GM12878 (cell line): ENCODE measurements at regions of chr12 and their contacts with region 1.

Region 1: GRCh38 chr12:53220801-53221202 is 11.2 kb downstream of the RARG start:
- DNase-seq: peak; percentile 69
- ATAC-seq: peak; percentile 86
- H3K4me3 ChIP-seq: peak overlapping the region; percentile 86
- H3K27ac ChIP-seq: peak overlapping the region; percentile 79
- H3K4me1 ChIP-seq: peaks cover 22% of the 10 kb centered on the region
- H3K27me3 ChIP-seq: no peaks in the 10 kb centered on the region
- CTCF ChIP-seq: no peak
- EP300 ChIP-seq: no peak
- POLR2A ChIP-seq: no peak
- RAD21 ChIP-seq: no peak

Region 2: DNA sequence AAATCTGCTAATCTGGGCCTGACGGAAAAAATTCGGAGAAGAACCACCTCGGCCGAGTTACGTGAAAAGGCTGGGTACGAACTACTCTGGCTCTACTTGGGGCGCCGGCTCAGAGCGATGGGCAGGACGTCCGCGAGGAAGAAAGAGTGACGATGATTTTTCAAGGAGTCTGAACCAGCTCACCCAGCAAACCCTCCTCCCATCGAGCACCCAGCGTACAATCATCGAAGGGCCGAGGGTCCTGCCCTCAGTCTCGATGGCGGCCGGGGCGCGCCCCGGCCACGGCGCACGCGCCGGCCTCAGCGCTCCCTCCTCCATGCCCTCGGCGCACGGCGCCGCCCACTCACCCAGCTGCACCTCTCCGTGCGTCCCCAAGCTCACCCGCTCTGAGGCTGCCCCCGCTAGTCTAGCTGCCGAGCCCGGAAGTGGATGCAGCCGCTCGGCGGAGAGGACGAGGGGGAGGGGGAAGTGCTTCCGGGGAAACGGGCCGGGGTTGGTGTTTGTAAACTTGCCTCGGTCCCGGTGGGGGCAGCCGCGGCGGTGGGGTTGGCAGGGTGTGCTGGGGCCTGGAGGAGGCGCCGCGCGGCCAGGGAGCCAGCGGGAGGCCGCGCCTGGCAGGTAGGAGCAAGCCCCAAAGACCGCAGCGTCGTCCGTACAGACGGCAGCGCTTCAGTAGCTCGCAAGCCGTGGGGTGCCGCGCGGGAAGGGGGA is 40.4 kb before region 1 on chr12 and contains the starts of genes CSAD and ZNF740:
- CTCF ChIA-PET with region 1: interaction called, 11 read pairs
- POLR2A ChIA-PET with region 1: interaction called, 9 read pairs
- RAD21 ChIA-PET with region 1: interaction called, 9 read pairs
- SMC1A ChIA-PET with region 1: interaction called, 4 read pairs
- in situ Hi-C with region 1: no loop called
- intact Hi-C with region 1: no loop called
- DNase-seq: peak; percentile 91
- ATAC-seq: peak; percentile 96
- H3K4me3 ChIP-seq: peak within 1 kb of the TSS; percentile 78
- H3K27ac ChIP-seq: peak within 1 kb of the TSS; percentile 91
- H3K4me1 ChIP-seq: peaks cover 13% of the 10 kb centered on the region; the same call in 1 of the 2 replicates
- H3K27me3 ChIP-seq: no peaks in the 10 kb centered on the region
- CTCF ChIP-seq: peak in 2 of 3 experiments; percentile 2 to 12; a peak in 1 of 6 replicates
- EP300 ChIP-seq: no peak
- POLR2A ChIP-seq: peak; percentile 81
- RAD21 ChIP-seq: no peak
- polyA plus RNA-seq, gene CSAD: 1.2 to 2.0 TPM
- polyA plus RNA-seq, gene ZNF740: 1.4 to 1.8 TPM

Region 3: GRCh38 chr12:53251477-53252348 is 30.9 kb after region 1 on chr12:
- CTCF ChIA-PET with region 1: interaction called, 136 read pairs
- POLR2A ChIA-PET with region 1: interaction called, 5 read pairs
- RAD21 ChIA-PET with region 1: interaction called, 101 read pairs
- SMC1A ChIA-PET with region 1: interaction called, 13 read pairs
- in situ Hi-C with region 1: no loop called
- intact Hi-C with region 1: loop called (anchors 2 kb)
- DNase-seq: peak; percentile 24
- ATAC-seq: peak; percentile 92
- H3K4me3 ChIP-seq: peak overlapping the region; percentile 99
- H3K27ac ChIP-seq: peak overlapping the region; percentile 66
- H3K4me1 ChIP-seq: peaks cover 28% of the 10 kb centered on the region
- H3K27me3 ChIP-seq: no peaks in the 10 kb centered on the region
- CTCF ChIP-seq: peak; percentile 52 to 83 (median 64); a peak in 5 of 6 replicates
- EP300 ChIP-seq: no peak
- POLR2A ChIP-seq: peak; percentile 92
- RAD21 ChIP-seq: peak; percentile 83

Region 4: DNA sequence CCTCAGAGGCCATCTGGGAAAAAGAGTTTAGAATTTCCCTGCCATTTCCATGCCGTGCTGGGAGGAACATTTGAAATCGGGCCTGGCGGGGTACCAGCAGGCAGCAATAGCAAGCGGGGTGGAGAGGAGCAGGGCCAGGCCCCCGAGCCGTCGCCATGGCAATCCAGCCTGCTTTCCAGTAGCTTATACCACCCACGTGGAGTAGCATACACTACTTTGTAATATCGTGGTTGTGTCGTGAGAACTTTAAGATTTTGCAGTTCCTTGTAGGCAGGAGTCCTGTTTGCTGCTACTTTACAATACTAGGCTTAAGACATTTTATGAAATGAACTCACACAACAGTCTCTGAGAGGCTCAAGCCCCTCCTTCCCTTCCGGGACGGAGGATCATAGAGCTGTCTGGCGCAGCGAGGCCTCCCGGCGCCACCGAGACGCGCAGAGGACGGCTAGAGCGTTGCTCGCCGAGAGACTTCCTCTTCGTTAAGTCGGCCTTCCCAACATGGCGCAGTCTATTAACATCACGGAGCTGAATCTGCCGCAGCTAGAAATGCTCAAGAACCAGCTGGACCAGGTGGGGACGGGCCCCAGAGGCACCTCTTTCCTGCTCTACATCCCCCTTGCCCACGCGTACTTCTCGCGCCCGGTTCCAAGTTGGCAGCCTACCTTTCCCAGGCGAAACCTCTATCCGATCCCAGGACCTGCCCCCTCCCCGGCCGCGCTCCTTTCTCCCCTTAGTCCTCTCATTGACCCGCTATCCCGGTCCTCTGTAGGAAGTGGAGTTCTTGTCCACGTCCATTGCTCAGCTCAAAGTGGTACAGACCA is 74.5 kb after region 1 on chr12 and contains the start of gene PFDN5:
- CTCF ChIA-PET with region 1: interaction called, 315 read pairs
- POLR2A ChIA-PET with region 1: interaction called, 4 read pairs
- RAD21 ChIA-PET with region 1: interaction called, 102 read pairs
- SMC1A ChIA-PET with region 1: interaction called, 96 read pairs
- in situ Hi-C with region 1: no loop called
- intact Hi-C with region 1: no loop called
- DNase-seq: peak; percentile 73
- ATAC-seq: peak; percentile 95
- H3K4me3 ChIP-seq: peak within 1 kb of the TSS; percentile 82
- H3K27ac ChIP-seq: peak within 1 kb of the TSS; percentile 75
- H3K4me1 ChIP-seq: peaks cover 21% of the 10 kb centered on the region
- H3K27me3 ChIP-seq: no peaks in the 10 kb centered on the region
- CTCF ChIP-seq: peak in 1 of 3 experiments; percentile 8; a peak in 1 of 6 replicates
- EP300 ChIP-seq: 0 out of 4 replicates have a peak, but pooled peaks of 1 of the 2 experiments have one; percentile 27
- POLR2A ChIP-seq: peak; percentile 90
- RAD21 ChIP-seq: no peak
- polyA plus RNA-seq, gene PFDN5: 1,522 to 1,596 TPM

Region 5: DNA sequence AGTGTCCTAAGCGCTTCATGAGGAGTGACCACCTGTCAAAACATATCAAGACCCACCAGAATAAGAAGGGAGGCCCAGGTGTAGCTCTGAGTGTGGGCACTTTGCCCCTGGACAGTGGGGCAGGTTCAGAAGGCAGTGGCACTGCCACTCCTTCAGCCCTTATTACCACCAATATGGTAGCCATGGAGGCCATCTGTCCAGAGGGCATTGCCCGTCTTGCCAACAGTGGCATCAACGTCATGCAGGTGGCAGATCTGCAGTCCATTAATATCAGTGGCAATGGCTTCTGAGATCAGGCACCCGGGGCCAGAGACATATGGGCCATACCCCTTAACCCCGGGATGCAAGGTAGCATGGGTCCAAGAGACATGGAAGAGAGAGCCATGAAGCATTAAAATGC is 190.1 kb after region 1 on chr12:
- CTCF ChIA-PET with region 1: no interaction called
- POLR2A ChIA-PET with region 1: no interaction called
- RAD21 ChIA-PET with region 1: no interaction called
- SMC1A ChIA-PET with region 1: no interaction called
- in situ Hi-C with region 1: no loop called
- intact Hi-C with region 1: no loop called
- DNase-seq: no peak
- ATAC-seq: no peak
- H3K4me3 ChIP-seq: no peak overlapping the region
- H3K27ac ChIP-seq: no peak overlapping the region
- H3K4me1 ChIP-seq: peaks cover 5% of the 10 kb centered on the region; the same call in 1 of the 2 replicates
- H3K27me3 ChIP-seq: no peaks in the 10 kb centered on the region
- CTCF ChIP-seq: no peak
- EP300 ChIP-seq: no peak
- POLR2A ChIP-seq: no peak
- RAD21 ChIP-seq: no peak